Posterior cingulate gyrus (tissue), 11 donors: ENCODE measurements at regions of chr7 and their contacts with region 1.

Region 1: GRCh38 chr7:16644636-16645592 is 640 bp downstream of the ANKMY2 start:
- DNase-seq: peak in 9 of 10 donors; percentile 29 to 88 (median 45)

Region 2: DNA sequence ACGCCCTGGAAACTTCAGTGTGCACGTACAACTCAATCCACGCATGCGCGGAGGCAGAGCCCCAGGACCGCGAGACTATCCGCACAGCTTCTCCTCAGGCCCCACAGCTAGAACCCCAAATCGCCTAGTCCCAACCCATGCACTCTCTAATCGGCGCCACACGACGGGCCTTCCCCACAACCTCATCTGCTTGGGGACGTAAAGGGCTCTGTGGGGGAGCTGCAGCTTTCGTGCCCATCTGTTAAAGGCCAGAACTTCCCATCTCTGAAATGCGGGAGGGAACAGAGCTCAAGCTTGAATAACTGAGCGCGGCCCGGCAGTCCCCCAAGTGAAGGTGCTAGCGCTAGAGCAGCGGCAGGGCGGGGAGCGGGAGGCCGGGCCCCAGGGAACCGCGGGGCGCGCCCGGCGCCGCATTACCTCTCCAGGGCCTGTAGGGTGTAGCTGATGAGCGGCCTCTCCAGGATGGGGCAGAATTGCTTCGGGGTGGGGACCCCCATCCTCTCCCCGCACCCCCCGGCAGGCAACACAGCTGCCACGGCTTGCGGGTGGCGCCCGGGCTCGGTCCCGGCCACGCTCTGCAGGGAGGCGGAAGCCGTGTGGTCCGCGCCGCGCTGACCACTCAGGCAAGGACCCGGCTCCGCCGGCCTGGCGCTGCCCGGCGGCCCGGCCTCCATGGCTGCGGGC is 224.1 kb before region 1 on chr7:
- intact Hi-C with region 1: loop called (anchors 5 kb)
- DNase-seq: peak; percentile 76 to 97 (median 85)